ENCODE measurements at regions of chr17 and their contacts with region 1.

Region 1: DNA sequence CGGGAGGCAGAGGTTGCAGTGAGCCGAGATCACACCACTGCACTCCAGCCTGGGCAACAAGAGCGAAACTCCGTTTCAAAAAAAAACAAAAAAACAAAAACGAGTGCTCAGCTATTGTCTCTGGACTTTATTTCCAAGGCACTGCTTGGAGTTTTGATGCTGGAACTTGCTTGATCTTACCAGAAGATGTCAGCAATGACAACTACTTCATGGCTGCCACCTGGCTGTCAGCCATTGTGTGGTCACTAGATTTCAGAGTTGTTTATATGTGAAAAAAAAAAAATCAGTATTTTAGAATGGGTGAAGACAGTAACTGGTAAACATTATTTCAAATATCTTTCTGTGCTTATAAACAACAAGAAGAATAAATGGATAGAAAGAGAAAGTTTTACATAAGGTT is 26.3 kb upstream of the OR4D1 start:
- DNase-seq: peak; percentile 77
- ATAC-seq: peak; percentile 74
- H3K4me3 ChIP-seq: no peak overlapping the region
- H3K27ac ChIP-seq: no peak overlapping the region
- H3K4me1 ChIP-seq: no peaks in the 10 kb centered on the region
- H3K27me3 ChIP-seq: peaks cover 30% of the 10 kb centered on the region
- CTCF ChIP-seq: peak; percentile 72

Region 2: GRCh38 chr17:58060596-58061191 is 61.2 kb before region 1 on chr17:
- CTCF ChIA-PET with region 1: no interaction called
- POLR2A ChIA-PET with region 1: no interaction called
- intact Hi-C with region 1: no loop called
- DNase-seq: no peak
- ATAC-seq: no peak
- H3K4me3 ChIP-seq: no peak overlapping the region
- H3K27ac ChIP-seq: no peak overlapping the region
- H3K4me1 ChIP-seq: peaks cover 12% of the 10 kb centered on the region
- H3K27me3 ChIP-seq: no peaks in the 10 kb centered on the region
- CTCF ChIP-seq: no peak

Region 3: GRCh38 chr17:58172369-58173071 is 50.6 kb after region 1 on chr17:
- CTCF ChIA-PET with region 1: interaction called, 8 read pairs
- POLR2A ChIA-PET with region 1: no interaction called
- intact Hi-C with region 1: loop called (anchors 1 kb)
- DNase-seq: peak; percentile 75
- ATAC-seq: peak; percentile 90
- H3K4me3 ChIP-seq: no peak overlapping the region
- H3K27ac ChIP-seq: no peak overlapping the region
- H3K4me1 ChIP-seq: no peaks in the 10 kb centered on the region
- H3K27me3 ChIP-seq: peaks cover 48% of the 10 kb centered on the region
- CTCF ChIP-seq: peak; percentile 85

Region 4: DNA sequence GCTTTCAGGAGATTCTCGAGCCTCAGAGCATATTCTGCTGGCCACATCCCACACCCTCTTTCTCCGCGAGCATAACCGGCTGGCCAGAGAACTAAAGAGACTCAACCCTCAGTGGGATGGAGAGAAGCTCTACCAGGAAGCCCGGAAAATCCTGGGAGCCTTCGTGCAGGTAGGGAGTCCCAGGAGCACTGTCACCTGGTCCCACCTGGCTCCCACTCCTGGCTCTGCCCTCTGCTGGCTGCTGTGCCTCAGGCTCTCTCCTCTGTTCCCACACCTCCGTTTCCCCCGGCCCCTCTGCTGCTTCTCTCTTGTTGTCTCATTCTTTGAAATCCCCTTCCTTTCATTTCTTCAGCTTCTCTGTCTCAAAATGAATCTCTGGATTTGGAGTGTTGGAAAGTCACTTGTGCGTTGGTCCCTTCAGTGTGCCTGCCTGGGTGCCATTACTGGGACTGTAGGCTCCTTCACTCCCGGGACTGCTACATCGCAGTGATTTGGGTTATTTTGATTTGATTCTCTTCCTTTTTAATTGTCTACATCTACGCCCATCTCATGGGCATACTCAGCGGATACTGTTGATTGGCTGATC is 133.0 kb after region 1 on chr17:
- CTCF ChIA-PET with region 1: interaction called, 4 read pairs
- POLR2A ChIA-PET with region 1: no interaction called
- intact Hi-C with region 1: loop called (anchors 2 kb)
- DNase-seq: peak; percentile 35
- ATAC-seq: peak; percentile 49
- H3K4me3 ChIP-seq: no peak overlapping the region
- H3K27ac ChIP-seq: no peak overlapping the region
- H3K4me1 ChIP-seq: no peaks in the 10 kb centered on the region
- H3K27me3 ChIP-seq: peaks cover 55% of the 10 kb centered on the region
- CTCF ChIP-seq: peak; percentile 65

Region 5: DNA sequence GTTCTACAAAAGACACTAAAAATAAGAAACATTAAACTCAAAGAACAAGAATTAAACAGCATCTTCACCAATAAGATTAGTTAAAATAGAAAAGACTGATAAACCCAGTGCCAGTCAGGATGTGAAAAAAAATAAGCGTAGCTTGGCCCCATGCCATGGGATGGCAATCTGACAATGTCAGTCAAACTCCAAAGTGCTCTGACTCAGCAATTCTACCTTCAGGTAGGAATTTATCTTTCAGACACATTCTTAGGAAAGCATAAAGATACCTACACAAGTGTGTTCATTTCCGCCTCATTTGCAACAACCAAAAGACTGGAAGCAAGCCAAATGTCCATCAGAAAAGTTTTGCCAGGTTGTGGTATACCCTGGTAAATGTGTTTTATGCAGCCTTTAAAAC is 167.9 kb after region 1 on chr17:
- CTCF ChIA-PET with region 1: interaction called, 5 read pairs
- POLR2A ChIA-PET with region 1: no interaction called
- intact Hi-C with region 1: loop called (anchors 10 kb)
- DNase-seq: peak; percentile 75
- ATAC-seq: no peak
- H3K4me3 ChIP-seq: no peak overlapping the region
- H3K27ac ChIP-seq: no peak overlapping the region
- H3K4me1 ChIP-seq: peaks cover 7% of the 10 kb centered on the region
- H3K27me3 ChIP-seq: peaks cover 46% of the 10 kb centered on the region
- CTCF ChIP-seq: no peak

Region 6: DNA sequence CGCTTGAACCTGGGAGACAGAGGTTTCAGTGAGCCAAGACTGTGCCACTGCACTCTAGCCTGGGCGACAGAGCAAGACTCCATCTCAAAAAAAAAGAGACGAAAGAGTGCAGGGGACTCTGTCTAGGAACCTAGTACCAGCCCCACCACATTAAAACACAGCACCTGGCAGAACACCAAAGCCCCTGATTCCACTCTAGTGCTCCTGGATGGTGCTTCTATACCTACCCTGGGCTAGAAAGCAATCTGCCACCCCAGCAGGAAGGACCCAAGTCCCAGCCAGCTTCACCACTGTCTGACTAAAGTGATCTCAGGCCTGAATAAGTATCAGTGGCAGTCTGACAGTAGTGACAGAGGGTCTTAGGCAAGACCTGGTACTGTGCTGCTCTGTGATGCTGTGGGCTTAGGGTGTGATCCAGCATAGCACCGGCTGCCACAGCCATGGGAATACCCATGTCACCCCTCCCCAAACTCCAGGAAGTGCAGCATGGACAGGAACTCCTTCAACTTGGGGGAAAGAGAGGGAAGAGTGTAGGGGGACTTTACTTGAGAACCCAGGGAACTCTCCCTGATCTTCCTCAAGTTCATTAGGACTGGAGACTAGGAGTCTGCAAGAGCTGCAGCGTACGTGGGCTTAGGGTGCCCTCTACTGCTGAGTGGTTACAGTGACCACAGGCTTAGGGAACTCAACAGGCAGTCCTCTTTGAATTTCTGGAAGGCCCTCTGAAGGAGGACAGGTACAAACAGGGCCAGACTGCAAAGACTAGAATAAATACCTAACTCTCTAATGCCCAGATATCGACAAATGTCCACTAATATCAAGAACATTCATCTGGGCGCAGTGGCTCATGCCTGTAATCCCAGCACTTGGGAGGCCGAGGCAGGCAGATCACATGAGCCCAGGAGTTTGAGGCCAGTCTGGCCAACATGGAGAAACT is 325.4 kb after region 1 on chr17:
- CTCF ChIA-PET with region 1: no interaction called
- POLR2A ChIA-PET with region 1: no interaction called
- intact Hi-C with region 1: loop called (anchors 2 kb)
- DNase-seq: peak; percentile 97
- ATAC-seq: peak; percentile 100
- H3K4me3 ChIP-seq: no peak overlapping the region
- H3K27ac ChIP-seq: no peak overlapping the region
- H3K4me1 ChIP-seq: no peaks in the 10 kb centered on the region
- H3K27me3 ChIP-seq: peaks cover 9% of the 10 kb centered on the region; the same call in 1 of the 2 replicates
- CTCF ChIP-seq: peak; percentile 96

Measured in PC-3 (cell line).